PC-3 (cell line): ENCODE measurements at regions of chr2 and their contacts with region 1.

Region 1: GRCh38 chr2:139478206-139478914 is 698.2 kb upstream of the NXPH2 start:
- DNase-seq: peak; percentile 37
- ATAC-seq: peak; percentile 50
- H3K4me3 ChIP-seq: no peak overlapping the region
- H3K27ac ChIP-seq: no peak overlapping the region
- H3K4me1 ChIP-seq: no peaks in the 10 kb centered on the region
- H3K27me3 ChIP-seq: no peaks in the 10 kb centered on the region
- CTCF ChIP-seq: peak; percentile 58

Region 2: DNA sequence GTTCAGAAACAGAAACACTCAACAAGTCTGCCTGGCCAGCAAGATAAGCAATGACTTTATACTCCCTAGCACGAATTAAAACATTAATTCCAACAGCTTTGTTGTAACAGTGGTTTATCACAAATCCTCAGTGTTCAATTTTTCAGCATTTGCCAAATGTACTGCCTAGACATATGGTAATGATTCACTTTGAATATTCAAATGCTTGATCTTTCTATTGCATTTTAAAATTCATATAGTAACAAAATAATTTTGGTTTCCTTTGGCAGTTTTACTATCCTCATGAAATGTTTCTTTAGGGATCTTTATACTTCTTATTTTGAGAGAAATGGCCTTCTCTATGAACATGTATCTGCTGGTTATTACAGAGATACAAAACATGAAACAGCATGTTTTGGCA is 153.6 kb after region 1 on chr2:
- CTCF ChIA-PET with region 1: no interaction called
- POLR2A ChIA-PET with region 1: no interaction called
- intact Hi-C with region 1: no loop called
- DNase-seq: no peak
- ATAC-seq: no peak
- H3K4me3 ChIP-seq: no peak overlapping the region
- H3K27ac ChIP-seq: no peak overlapping the region
- H3K4me1 ChIP-seq: no peaks in the 10 kb centered on the region
- H3K27me3 ChIP-seq: no peaks in the 10 kb centered on the region
- CTCF ChIP-seq: no peak

Region 3: GRCh38 chr2:139708430-139708829 is 230.1 kb after region 1 on chr2:
- CTCF ChIA-PET with region 1: interaction called, 3 read pairs
- POLR2A ChIA-PET with region 1: no interaction called
- intact Hi-C with region 1: loop called (anchors 1 kb)
- DNase-seq: no peak
- ATAC-seq: no peak
- H3K4me3 ChIP-seq: no peak overlapping the region
- H3K27ac ChIP-seq: no peak overlapping the region
- H3K4me1 ChIP-seq: no peaks in the 10 kb centered on the region
- H3K27me3 ChIP-seq: no peaks in the 10 kb centered on the region
- CTCF ChIP-seq: no peak

Region 4: GRCh38 chr2:139946693-139947092 is 468.3 kb after region 1 on chr2:
- CTCF ChIA-PET with region 1: no interaction called
- POLR2A ChIA-PET with region 1: no interaction called
- intact Hi-C with region 1: loop called (anchors 5 kb)
- DNase-seq: peak; percentile 18
- ATAC-seq: peak; percentile 49; the same call in 1 of the 2 replicates
- H3K4me3 ChIP-seq: no peak overlapping the region
- H3K27ac ChIP-seq: no peak overlapping the region
- H3K4me1 ChIP-seq: no peaks in the 10 kb centered on the region
- H3K27me3 ChIP-seq: no peaks in the 10 kb centered on the region
- CTCF ChIP-seq: peak; percentile 74